Mammary epithelial cell (primary cell): ENCODE measurements at regions of chr12 and their contacts with region 1.

Region 1: GRCh38 chr12:51814311-51815088 is 34.0 kb downstream of the FIGNL2 start:
- DNase-seq: peak; percentile 18
- H3K4me3 ChIP-seq: peak overlapping the region in 2 of 3 experiments; percentile 40 to 43
- H3K27ac ChIP-seq: no peak overlapping the region
- H3K4me1 ChIP-seq: peaks cover 4% of the 10 kb centered on the region
- H3K27me3 ChIP-seq: peaks cover 2% of the 10 kb centered on the region
- CTCF ChIP-seq: peak; percentile 44 to 68

Region 2: DNA sequence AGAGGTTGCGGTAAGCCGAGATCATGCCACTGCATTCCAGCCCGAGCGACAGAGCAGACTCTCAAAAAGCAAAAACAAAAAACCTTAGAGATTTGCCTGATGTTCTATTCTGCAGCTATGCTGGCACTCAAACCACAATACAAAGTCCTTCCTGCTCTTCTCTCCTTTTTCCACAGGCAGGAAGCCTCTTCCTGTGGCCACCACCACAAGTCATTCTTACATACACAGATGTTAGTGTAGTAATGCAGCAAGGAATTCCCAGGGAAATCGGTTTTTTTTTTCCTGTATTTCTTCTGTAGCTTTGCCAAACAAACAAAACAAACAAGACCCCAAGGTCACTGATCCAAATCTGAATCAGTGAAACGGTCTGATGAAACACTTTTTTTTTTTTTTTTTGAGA is 70.3 kb before region 1 on chr12:
- CTCF ChIA-PET with region 1: no interaction called
- dilution Hi-C with region 1: no loop called
- in situ Hi-C with region 1: no loop called
- intact Hi-C with region 1: no loop called
- DNase-seq: no peak
- H3K4me3 ChIP-seq: no peak overlapping the region
- H3K27ac ChIP-seq: no peak overlapping the region
- H3K4me1 ChIP-seq: no peaks in the 10 kb centered on the region
- H3K27me3 ChIP-seq: no peaks in the 10 kb centered on the region
- CTCF ChIP-seq: no peak

Region 3: GRCh38 chr12:51766067-51766676 is 48.3 kb before region 1 on chr12:
- CTCF ChIA-PET with region 1: no interaction called
- dilution Hi-C with region 1: loop called (anchors 5 kb)
- in situ Hi-C with region 1: no loop called
- intact Hi-C with region 1: no loop called
- DNase-seq: no peak
- H3K4me3 ChIP-seq: no peak overlapping the region
- H3K27ac ChIP-seq: no peak overlapping the region
- H3K4me1 ChIP-seq: peaks cover 5% of the 10 kb centered on the region
- H3K27me3 ChIP-seq: no peaks in the 10 kb centered on the region
- CTCF ChIP-seq: no peak